Panc1 (cell line): ENCODE measurements at regions of chr11 and their contacts with region 1.

Region 1: DNA sequence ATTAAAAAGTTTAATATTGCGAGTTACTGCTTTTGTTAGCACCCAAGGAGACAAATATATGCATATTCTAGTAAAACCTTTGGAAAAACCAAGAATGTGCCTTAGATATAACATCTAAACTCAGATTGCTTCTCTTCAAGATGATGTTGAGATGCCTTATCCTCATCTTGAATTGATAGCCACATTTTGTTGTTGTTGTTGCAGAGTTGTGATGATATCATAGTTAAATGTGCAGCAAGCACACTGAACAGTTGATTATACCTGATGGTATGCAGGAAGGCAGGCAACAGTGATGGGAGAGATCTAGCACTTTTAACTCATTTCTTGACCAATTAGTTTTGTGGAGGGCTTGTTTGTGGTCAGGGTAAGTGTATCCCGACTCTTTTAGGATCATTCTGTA is 48.0 kb downstream of the KDM2A start:
- DNase-seq: no peak
- ATAC-seq: no peak
- H3K4me3 ChIP-seq: no peak overlapping the region
- H3K27ac ChIP-seq: no peak overlapping the region
- H3K4me1 ChIP-seq: peaks cover 7% of the 10 kb centered on the region; the same call in 1 of the 2 replicates
- H3K27me3 ChIP-seq: no peaks in the 10 kb centered on the region
- CTCF ChIP-seq: no peak

Region 2: DNA sequence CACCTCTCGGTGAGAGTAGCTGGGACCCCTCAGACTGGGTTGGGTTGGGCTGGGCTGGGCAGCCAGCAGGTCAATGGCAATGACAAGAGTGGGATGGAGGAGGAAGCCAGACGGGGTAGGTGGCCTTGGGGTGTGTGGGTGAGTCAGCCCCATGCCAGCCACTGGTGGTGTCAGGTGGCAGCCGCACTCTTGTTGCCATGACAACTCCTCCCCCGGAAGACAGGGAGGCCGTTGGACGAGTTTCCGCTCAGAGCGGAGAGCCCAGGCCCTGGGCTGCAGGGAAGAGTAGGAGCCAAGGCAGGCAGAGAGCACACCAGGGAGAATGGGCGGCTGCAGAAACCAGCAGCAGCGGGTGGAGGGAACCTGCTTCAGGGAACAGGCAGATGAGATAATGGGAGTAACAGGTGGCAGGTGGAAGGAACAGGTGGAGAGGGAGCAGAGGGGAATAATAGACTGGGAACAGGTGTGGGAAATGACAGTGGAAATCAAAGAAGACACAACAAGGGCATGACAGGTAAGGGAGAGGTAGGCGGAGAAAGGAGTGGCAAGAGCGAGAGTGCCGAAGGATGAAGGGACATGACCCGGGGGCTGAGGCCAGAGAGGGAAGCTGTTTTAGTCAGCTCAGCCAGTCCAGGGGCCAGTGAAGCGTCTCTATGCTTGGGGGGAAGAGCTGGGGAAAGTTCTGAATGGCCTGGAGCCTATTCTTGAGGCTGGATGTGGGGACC is 446.7 kb before region 1 on chr11:
- CTCF ChIA-PET with region 1: no interaction called
- POLR2A ChIA-PET with region 1: interaction called, 22 read pairs
- in situ Hi-C with region 1: no loop called
- intact Hi-C with region 1: no loop called
- DNase-seq: no peak
- ATAC-seq: 0 out of 2 replicates have a peak, but pooled peaks have one; percentile 18
- H3K4me3 ChIP-seq: no peak overlapping the region
- H3K27ac ChIP-seq: no peak overlapping the region
- H3K4me1 ChIP-seq: no peaks in the 10 kb centered on the region
- H3K27me3 ChIP-seq: no peaks in the 10 kb centered on the region
- CTCF ChIP-seq: no peak

Region 3: GRCh38 chr11:67082035-67082791 is 84.9 kb before region 1 on chr11:
- CTCF ChIA-PET with region 1: interaction called, 10 read pairs
- POLR2A ChIA-PET with region 1: no interaction called
- in situ Hi-C with region 1: no loop called
- intact Hi-C with region 1: loop called (anchors 5 kb)
- DNase-seq: no peak
- ATAC-seq: no peak
- H3K4me3 ChIP-seq: no peak overlapping the region
- H3K27ac ChIP-seq: no peak overlapping the region
- H3K4me1 ChIP-seq: peaks cover 6% of the 10 kb centered on the region
- H3K27me3 ChIP-seq: no peaks in the 10 kb centered on the region
- CTCF ChIP-seq: no peak

Region 4: DNA sequence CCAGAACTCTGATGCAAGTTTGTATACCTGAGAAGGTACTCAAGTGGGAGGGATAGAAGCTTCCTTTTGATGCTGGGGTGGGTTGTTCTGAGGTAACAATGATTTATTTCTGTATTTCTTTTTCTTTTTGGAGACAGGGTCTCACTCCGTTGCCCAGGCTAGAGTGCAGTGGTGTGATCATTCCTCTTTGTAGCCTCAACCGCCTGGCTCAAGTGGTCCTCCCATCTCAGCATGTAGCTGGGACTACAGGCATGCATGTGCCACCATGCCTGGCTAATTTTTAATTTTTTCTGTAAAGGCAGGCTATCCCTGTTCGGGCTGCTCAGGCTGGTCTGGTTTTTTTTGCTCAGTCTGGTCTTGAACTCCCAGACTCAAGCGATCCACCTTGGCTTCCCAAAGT is 40.1 kb before region 1 on chr11:
- CTCF ChIA-PET with region 1: interaction called, 12 read pairs
- POLR2A ChIA-PET with region 1: interaction called, 7 read pairs
- in situ Hi-C with region 1: no loop called
- intact Hi-C with region 1: no loop called
- DNase-seq: no peak
- ATAC-seq: no peak
- H3K4me3 ChIP-seq: no peak overlapping the region
- H3K27ac ChIP-seq: no peak overlapping the region
- H3K4me1 ChIP-seq: peaks cover 12% of the 10 kb centered on the region
- H3K27me3 ChIP-seq: no peaks in the 10 kb centered on the region
- CTCF ChIP-seq: no peak